ENCODE measurements at regions of chr17 and their contacts with region 1.

Region 1: DNA sequence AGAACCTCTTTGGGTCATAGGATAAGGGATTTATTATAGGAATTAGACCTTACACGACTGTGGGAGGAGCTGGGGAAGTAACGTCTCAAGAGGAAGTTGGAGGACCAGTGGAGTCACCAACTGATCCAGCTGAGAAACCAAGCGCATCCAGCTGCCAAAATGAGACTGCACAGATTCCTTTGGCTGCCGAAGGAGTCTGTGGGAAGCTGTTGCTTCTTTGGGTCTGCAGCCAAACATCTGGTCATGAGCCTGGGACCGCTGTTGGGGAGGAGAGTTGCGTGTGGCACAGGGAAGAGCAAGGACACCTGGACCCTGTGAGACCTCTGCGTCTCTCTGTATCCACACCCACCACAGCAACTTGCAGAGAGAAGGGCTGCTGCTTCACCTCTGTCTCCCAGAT is 2.4 kb upstream of the NACA2 start:
- DNase-seq: no peak
- ATAC-seq: no peak
- H3K4me3 ChIP-seq: no peak overlapping the region
- H3K4me3 Mint-ChIP-seq: no peak overlapping the region
- H3K27ac ChIP-seq: no peak overlapping the region
- H3K27ac Mint-ChIP-seq: no peak overlapping the region
- H3K4me1 ChIP-seq: no peaks in the 10 kb centered on the region
- H3K4me1 Mint-ChIP-seq: no peaks in the 10 kb centered on the region
- H3K27me3 ChIP-seq: peaks cover 3 to 10% of the 10 kb centered on the region in 2 experiments
- H3K27me3 Mint-ChIP-seq: peaks cover 19% of the 10 kb centered on the region in 2 donors

Region 2: DNA sequence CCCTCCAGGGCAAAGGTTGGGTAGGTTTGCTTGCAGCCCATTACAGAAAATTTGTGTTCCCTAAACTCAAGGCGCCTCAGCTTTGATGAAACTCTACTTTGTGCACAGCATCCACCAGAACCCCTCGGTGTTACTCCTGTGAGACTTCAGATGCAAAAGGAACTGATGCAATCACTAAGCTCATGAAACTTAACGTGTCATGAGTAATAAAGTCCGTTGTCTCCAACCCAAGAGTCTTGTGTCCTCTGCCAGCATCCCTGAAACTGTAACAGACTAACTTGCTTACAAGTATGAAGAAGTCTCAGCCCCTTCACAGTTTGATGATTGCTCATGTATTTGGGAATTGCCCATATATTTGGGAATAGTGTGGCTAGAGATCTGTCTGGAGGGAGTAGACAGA is 1289.5 kb after region 1 on chr17:
- CTCF ChIA-PET with region 1: no interaction called
- POLR2A ChIA-PET with region 1: interaction called in 1 of 2 experiments, 10 read pairs
- DNase-seq: no peak
- ATAC-seq: no peak
- H3K4me3 ChIP-seq: no peak overlapping the region
- H3K4me3 Mint-ChIP-seq: no peak overlapping the region
- H3K27ac ChIP-seq: no peak overlapping the region
- H3K27ac Mint-ChIP-seq: no peak overlapping the region
- H3K4me1 ChIP-seq: no peaks in the 10 kb centered on the region
- H3K4me1 Mint-ChIP-seq: no peaks in the 10 kb centered on the region
- H3K27me3 ChIP-seq: peaks cover 0 to 8% of the 10 kb centered on the region in 2 experiments
- H3K27me3 Mint-ChIP-seq: peaks cover 12 to 17% of the 10 kb centered on the region in 2 donors

Measured in T-cell (primary cell).